ENCODE measurements at regions of chr20 and their contacts with region 1.

Region 1: DNA sequence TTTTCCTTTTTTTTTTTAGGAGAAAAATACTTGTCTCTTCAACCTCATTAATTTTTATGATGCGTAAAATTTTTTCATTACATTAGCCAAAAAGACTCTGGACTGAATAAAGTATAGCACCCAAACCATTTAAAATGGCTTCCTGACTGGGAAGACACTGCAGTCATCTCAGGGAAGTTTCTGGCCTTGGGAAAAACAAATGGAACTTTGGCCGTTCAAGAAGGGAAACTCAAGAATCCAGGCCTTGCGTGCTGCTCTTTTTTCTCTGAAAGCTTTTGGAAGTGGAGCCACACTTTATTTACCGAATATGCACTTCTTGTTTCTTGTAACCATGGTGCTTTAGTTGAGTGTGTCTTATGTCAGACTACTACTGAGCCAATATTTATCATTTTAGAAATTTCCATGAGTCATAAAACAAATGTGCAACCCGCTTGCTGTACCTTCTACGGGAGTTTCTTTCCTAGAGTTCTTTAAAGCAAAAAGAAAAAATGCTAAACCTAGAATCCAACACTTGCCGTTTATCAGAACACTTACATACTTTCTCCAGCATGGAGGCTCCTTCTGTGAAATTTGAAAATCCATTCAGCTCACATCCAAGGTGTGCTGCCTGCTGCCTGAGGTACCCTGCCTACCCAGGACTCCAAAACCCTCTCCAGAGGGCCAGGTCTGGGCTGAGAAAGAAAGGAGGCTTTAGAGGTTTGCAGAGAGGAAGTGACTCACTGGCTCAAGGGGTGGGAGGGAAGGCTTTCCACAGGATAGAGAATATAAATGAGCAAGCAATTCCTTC is 11.5 kb upstream of the DSTN start:
- DNase-seq: no peak
- ATAC-seq: peak in 2 of 4 experiments; percentile 43 to 44
- H3K4me3 ChIP-seq: no peak overlapping the region
- H3K4me3 Mint-ChIP-seq: no peak overlapping the region
- H3K27ac ChIP-seq: no peak overlapping the region
- H3K27ac Mint-ChIP-seq: peak overlapping the region in 1 of 2 donors; percentile 31
- H3K4me1 ChIP-seq: peaks cover 0 to 2% of the 10 kb centered on the region in 2 experiments
- H3K4me1 Mint-ChIP-seq: peaks cover 5 to 6% (median 5%) of the 10 kb centered on the region in 3 donors
- H3K27me3 ChIP-seq: no peaks in the 10 kb centered on the region
- H3K27me3 Mint-ChIP-seq: no peaks in the 10 kb centered on the region

Region 2: GRCh38 chr20:17589161-17589834 is 31.0 kb after region 1 on chr20:
- CTCF ChIA-PET with region 1: interaction called in 1 of 2 experiments, 4 read pairs
- POLR2A ChIA-PET with region 1: interaction called in 1 of 2 experiments, 10 read pairs
- DNase-seq: no peak
- ATAC-seq: no peak
- H3K4me3 ChIP-seq: no peak overlapping the region
- H3K4me3 Mint-ChIP-seq: no peak overlapping the region
- H3K27ac ChIP-seq: no peak overlapping the region
- H3K27ac Mint-ChIP-seq: no peak overlapping the region
- H3K4me1 ChIP-seq: no peaks in the 10 kb centered on the region
- H3K4me1 Mint-ChIP-seq: peaks cover 45 to 55% (median 45%) of the 10 kb centered on the region in 3 donors
- H3K27me3 ChIP-seq: no peaks in the 10 kb centered on the region
- H3K27me3 Mint-ChIP-seq: no peaks in the 10 kb centered on the region

Measured in T-cell (primary cell).